HCT116 (cell line): ENCODE measurements at regions of chr7 and their contacts with region 1.

Region 1: DNA sequence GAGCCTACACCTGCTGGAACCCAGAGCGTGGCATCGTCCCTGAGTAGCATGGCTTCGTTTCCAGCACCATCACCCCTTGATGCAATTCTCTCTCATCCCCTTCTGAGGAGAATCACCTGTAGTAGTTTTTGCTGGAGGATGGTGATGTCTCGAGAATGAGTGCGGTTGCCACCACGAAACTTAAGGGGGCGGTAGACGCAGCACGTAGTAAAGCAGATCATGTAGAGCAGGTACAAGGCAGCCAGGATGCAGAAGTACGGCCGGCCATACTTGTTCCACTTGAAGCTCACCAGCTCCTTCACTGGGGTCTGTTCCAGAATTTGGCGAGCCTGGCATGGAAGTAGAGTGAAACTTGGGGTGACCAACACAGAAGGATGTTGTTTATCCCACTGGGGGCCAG is 8.1 kb downstream of the TRPV5 start:
- DNase-seq: no peak
- ATAC-seq: peak; percentile 79
- H3K4me3 ChIP-seq: no peak overlapping the region
- H3K27ac ChIP-seq: no peak overlapping the region
- H3K4me1 ChIP-seq: no peaks in the 10 kb centered on the region
- H3K27me3 ChIP-seq: peaks cover 5% of the 10 kb centered on the region; the same call in 1 of the 2 replicates
- CTCF ChIP-seq: peak; percentile 21 to 50 (median 50); a peak in 4 of 6 replicates
- POLR2A ChIP-seq: no peak
- RAD21 ChIP-seq: no peak

Region 2: DNA sequence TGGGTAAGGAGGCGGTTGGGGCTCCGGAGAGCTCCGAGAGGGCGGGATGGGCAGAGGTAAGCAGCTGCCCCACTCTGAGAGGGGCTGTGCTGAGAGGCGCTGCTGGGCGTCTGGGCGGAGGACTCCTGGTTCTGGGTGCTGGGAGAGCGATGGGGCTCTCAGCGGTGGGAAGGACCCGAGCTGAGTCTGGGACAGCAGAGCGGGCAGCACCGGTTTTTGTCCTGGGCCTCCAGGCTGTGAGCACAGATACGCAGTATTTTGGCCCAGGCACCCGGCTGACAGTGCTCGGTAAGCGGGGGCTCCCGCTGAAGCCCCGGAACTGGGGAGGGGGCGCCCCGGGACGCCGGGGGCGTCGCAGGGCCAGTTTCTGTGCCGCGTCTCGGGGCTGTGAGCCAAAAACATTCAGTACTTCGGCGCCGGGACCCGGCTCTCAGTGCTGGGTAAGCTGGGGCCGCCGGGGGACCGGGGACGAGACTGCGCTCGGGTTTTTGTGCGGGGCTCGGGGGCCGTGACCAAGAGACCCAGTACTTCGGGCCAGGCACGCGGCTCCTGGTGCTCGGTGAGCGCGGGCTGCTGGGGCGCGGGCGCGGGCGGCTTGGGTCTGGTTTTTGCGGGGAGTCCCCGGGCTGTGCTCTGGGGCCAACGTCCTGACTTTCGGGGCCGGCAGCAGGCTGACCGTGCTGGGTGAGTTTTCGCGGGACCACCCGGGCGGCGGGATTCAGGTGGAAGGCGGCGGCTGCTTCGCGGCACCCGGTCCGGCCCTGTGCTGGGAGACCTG is 128.6 kb before region 1 on chr7:
- CTCF ChIA-PET with region 1: no interaction called
- POLR2A ChIA-PET with region 1: no interaction called
- RAD21 ChIA-PET with region 1: no interaction called
- intact Hi-C with region 1: no loop called
- DNase-seq: no peak
- ATAC-seq: no peak
- H3K4me3 ChIP-seq: no peak overlapping the region
- H3K27ac ChIP-seq: no peak overlapping the region
- H3K4me1 ChIP-seq: no peaks in the 10 kb centered on the region
- H3K27me3 ChIP-seq: no peaks in the 10 kb centered on the region
- CTCF ChIP-seq: no peak
- POLR2A ChIP-seq: no peak
- RAD21 ChIP-seq: no peak

Region 3: DNA sequence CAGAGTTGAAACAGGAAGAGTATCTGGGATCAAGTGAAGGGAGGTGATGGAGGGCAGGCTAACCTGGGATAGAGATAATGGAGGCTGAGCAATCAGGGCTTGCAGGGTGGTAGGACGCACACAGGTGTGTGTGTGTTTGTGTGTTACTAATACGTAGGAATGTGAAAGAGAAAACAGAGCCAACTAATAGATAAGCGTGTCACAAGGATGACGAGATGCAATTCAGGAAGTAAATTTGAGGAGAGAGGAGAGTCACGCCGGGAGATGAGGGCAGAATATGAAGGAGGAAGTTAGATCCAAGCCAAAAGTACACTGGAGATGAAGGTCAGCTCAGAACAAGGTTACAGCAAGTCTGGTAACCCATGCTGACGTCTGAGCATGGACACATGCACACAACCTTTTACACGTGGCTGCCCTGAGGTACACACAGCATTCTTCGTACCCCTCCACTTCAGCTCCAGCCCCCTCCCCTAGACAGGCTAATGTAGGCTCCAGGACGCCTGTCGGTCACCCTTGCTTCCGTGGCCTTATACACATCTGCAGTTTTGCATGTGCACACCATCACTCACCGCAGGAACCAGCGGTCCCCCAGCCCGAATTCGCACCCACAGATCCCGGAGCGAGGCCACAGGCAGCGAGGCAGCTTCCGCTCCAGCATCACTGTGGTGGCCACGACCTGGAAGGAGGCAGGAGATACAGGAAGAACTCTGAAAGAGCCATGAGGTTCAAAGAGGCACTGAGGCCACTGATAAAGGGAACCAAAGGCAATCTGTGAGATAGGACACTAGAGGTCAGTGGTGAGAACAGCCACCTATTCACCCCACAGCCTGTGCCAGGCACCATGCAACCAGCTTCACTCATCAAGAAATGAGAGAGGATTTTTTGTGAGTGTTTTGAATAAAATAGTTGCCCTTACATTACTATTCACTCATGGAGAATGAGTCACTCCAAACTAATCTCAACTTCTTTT is 16.2 kb before region 1 on chr7:
- CTCF ChIA-PET with region 1: interaction called, 11 read pairs
- POLR2A ChIA-PET with region 1: interaction called, 3 read pairs
- RAD21 ChIA-PET with region 1: no interaction called
- intact Hi-C with region 1: no loop called
- DNase-seq: peak; percentile 18
- ATAC-seq: peak; percentile 96
- H3K4me3 ChIP-seq: no peak overlapping the region
- H3K27ac ChIP-seq: no peak overlapping the region
- H3K4me1 ChIP-seq: no peaks in the 10 kb centered on the region
- H3K27me3 ChIP-seq: peaks cover 7% of the 10 kb centered on the region; the same call in 1 of the 2 replicates
- CTCF ChIP-seq: peak; percentile 43 to 69 (median 49); a peak in 5 of 6 replicates
- POLR2A ChIP-seq: no peak
- RAD21 ChIP-seq: peak; percentile 40

Region 4: GRCh38 chr7:142935927-142936565 is 10.6 kb after region 1 on chr7:
- CTCF ChIA-PET with region 1: no interaction called
- POLR2A ChIA-PET with region 1: no interaction called
- RAD21 ChIA-PET with region 1: no interaction called
- intact Hi-C with region 1: no loop called
- DNase-seq: no peak
- ATAC-seq: no peak
- H3K4me3 ChIP-seq: no peak overlapping the region
- H3K27ac ChIP-seq: no peak overlapping the region
- H3K4me1 ChIP-seq: no peaks in the 10 kb centered on the region
- H3K27me3 ChIP-seq: no peaks in the 10 kb centered on the region
- CTCF ChIP-seq: no peak
- POLR2A ChIP-seq: no peak
- RAD21 ChIP-seq: no peak